Mammary epithelial cell (primary cell): ENCODE measurements at regions of chr14 and their contacts with region 1.

Region 1: DNA sequence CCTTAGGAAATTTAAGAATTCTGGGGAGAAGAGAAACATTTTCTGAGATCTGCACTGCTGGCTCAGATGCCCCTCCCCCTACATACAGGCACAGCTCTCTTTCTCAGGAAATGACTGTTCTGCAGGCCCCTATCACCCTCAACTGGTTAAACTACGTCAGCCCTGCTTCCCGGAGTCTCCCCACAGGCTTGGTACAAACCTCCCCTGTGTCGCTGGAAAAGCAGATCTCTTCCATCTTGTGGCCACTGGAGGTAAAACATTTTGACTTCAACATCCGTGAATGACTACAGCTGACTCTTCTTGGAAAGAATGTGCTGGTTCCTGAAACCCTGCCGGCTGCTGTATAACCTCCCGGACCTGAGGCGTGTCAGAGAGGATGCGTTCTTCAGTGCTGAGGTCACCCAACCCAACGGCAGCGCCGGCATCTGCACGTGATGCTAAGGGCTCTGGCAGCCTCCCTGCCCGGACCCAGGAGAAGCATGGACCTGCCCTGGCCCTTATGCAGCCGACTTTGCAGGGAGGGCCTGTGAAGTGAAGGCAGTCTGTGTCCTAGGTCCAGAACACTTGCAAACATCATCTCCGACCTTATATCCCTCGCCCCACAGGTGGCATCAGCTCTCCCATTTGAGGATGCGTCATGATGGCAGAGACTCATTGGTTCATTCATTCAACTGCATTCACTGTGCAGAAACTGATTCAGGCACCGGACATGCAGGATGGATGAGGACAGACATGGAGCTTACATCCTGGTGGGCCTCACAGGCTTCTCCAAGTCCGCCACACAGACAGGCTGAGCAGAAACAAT is 129.3 kb downstream of the GCH1 start:
- DNase-seq: peak; percentile 99
- H3K4me3 ChIP-seq: no peak overlapping the region
- H3K27ac ChIP-seq: peak overlapping the region; percentile 93
- H3K4me1 ChIP-seq: peaks cover 43% of the 10 kb centered on the region
- H3K27me3 ChIP-seq: no peaks in the 10 kb centered on the region
- CTCF ChIP-seq: peak; percentile 66 to 75

Region 2: GRCh38 chr14:54509546-54510501 is 263.5 kb before region 1 on chr14 and contains the start of gene CGRRF1:
- CTCF ChIA-PET with region 1: no interaction called
- dilution Hi-C with region 1: no loop called
- in situ Hi-C with region 1: no loop called
- intact Hi-C with region 1: loop called (anchors 1 kb)
- DNase-seq: peak; percentile 98
- H3K4me3 ChIP-seq: peak within 1 kb of the TSS; percentile 90 to 97 (median 96)
- H3K27ac ChIP-seq: peak within 1 kb of the TSS; percentile 63
- H3K4me1 ChIP-seq: peaks cover 8% of the 10 kb centered on the region
- H3K27me3 ChIP-seq: no peaks in the 10 kb centered on the region
- CTCF ChIP-seq: peak in 1 of 2 donors; percentile 49
- total RNA-seq, gene CGRRF1: 14.3 to 16.4 TPM

Region 3: GRCh38 chr14:54652188-54652587 is 121.2 kb before region 1 on chr14:
- CTCF ChIA-PET with region 1: no interaction called
- dilution Hi-C with region 1: no loop called
- in situ Hi-C with region 1: no loop called
- intact Hi-C with region 1: loop called (anchors 5 kb)
- DNase-seq: peak; percentile 98
- H3K4me3 ChIP-seq: peak overlapping the region in 2 of 3 experiments; percentile 37 to 40
- H3K27ac ChIP-seq: peak overlapping the region; percentile 94
- H3K4me1 ChIP-seq: peaks cover 45% of the 10 kb centered on the region
- H3K27me3 ChIP-seq: no peaks in the 10 kb centered on the region
- CTCF ChIP-seq: no peak

Region 4: DNA sequence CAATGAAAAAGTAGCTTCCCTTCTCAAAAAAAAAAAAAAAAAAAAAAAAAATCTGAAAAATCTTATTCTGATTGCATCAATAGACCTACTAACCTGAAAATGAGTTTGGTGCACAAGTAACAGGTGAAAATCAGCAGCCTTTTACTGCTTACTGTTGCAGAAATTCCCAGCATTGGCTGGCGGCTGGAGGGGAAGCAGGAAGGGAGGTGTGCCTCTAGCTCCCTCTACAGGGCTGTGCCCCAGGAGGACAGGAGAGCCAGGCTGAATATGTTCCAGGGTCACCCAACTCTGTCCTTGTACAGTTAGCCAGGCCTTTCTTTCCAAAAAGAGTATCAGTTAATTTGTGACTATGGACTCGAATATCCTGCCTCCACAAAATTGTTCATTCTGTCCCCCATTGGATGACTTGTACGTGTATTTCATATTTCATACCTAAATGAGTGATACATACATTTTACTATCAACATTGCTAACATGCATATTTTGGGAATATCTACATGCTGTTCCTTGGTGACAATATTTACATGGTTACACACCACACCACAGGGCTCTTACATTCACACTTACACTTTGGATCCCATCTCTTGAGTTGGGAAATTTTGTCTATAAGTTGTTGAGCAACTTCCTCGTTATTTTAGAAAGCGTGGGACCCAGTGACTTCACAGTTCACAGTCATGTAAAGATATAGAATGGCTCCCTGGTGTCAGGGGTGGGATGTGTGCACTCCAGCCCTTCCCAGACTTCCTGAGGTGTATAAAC is 81.7 kb before region 1 on chr14:
- CTCF ChIA-PET with region 1: interaction called, 6 read pairs
- dilution Hi-C with region 1: no loop called
- in situ Hi-C with region 1: no loop called
- intact Hi-C with region 1: loop called (anchors 1 kb)
- DNase-seq: peak; percentile 64
- H3K4me3 ChIP-seq: no peak overlapping the region
- H3K27ac ChIP-seq: no peak overlapping the region
- H3K4me1 ChIP-seq: peaks cover 8% of the 10 kb centered on the region
- H3K27me3 ChIP-seq: no peaks in the 10 kb centered on the region
- CTCF ChIP-seq: peak; percentile 93 to 97

Region 5: GRCh38 chr14:54698966-54699530 is 74.3 kb before region 1 on chr14:
- CTCF ChIA-PET with region 1: interaction called, 13 read pairs
- dilution Hi-C with region 1: no loop called
- in situ Hi-C with region 1: no loop called
- intact Hi-C with region 1: loop called (anchors 1 kb)
- DNase-seq: no peak
- H3K4me3 ChIP-seq: no peak overlapping the region
- H3K27ac ChIP-seq: no peak overlapping the region
- H3K4me1 ChIP-seq: peaks cover 30% of the 10 kb centered on the region
- H3K27me3 ChIP-seq: no peaks in the 10 kb centered on the region
- CTCF ChIP-seq: no peak

Region 6: DNA sequence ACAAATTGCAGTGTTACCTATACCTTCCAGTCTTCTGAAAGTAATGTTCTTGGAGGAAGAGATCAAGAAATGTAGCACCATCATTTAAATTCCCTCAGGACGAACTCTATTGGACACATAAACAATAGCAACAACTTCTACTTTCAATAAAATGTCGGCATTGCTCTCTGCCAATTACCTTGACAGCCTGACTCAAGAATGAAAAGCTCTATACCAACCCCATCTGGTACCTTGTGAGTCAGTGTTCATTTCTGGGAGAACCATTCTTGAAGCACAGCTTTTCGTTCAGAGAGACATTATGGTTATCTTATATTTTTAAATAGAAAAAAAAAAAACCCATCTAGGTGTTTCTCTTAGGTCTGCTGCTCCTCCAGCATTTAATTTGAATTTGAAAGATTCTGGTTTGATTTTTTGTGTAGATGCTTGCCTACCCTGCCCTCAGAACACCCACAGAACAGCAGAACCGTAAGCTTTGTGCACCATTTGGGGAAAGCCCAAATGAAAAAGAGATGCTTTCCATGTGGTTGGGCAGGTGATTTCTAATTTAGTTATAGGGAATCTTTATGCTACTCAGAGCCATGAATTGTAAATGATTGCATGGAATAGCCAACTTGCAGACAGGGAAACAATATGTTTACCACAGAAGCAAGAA is 50.5 kb before region 1 on chr14:
- CTCF ChIA-PET with region 1: interaction called, 3 read pairs
- dilution Hi-C with region 1: no loop called
- in situ Hi-C with region 1: no loop called
- intact Hi-C with region 1: loop called (anchors 2 kb)
- DNase-seq: peak; percentile 58
- H3K4me3 ChIP-seq: no peak overlapping the region
- H3K27ac ChIP-seq: no peak overlapping the region
- H3K4me1 ChIP-seq: no peaks in the 10 kb centered on the region
- H3K27me3 ChIP-seq: no peaks in the 10 kb centered on the region
- CTCF ChIP-seq: peak; percentile 52 to 73

Region 7: GRCh38 chr14:54805521-54806322 is 32.3 kb after region 1 on chr14:
- CTCF ChIA-PET with region 1: no interaction called
- dilution Hi-C with region 1: no loop called
- in situ Hi-C with region 1: no loop called
- intact Hi-C with region 1: loop called (anchors 1 kb)
- DNase-seq: peak; percentile 73
- H3K4me3 ChIP-seq: peak overlapping the region in 1 of 3 experiments; percentile 17
- H3K27ac ChIP-seq: no peak overlapping the region
- H3K4me1 ChIP-seq: peaks cover 13% of the 10 kb centered on the region
- H3K27me3 ChIP-seq: no peaks in the 10 kb centered on the region
- CTCF ChIP-seq: peak; percentile 89 to 93